WTC11 (cell line): ENCODE measurements at regions of chr7 and their contacts with region 1.

Region 1: GRCh38 chr7:118169146-118169545 is 14.8 kb upstream of the LSM8 start:
- DNase-seq: no peak
- ATAC-seq: no peak
- H3K4me3 Mint-ChIP-seq: no peak overlapping the region
- H3K27ac Mint-ChIP-seq: no peak overlapping the region
- H3K4me1 Mint-ChIP-seq: no peaks in the 10 kb centered on the region
- H3K27me3 Mint-ChIP-seq: no peaks in the 10 kb centered on the region
- CTCF ChIP-seq: no peak

Region 2: DNA sequence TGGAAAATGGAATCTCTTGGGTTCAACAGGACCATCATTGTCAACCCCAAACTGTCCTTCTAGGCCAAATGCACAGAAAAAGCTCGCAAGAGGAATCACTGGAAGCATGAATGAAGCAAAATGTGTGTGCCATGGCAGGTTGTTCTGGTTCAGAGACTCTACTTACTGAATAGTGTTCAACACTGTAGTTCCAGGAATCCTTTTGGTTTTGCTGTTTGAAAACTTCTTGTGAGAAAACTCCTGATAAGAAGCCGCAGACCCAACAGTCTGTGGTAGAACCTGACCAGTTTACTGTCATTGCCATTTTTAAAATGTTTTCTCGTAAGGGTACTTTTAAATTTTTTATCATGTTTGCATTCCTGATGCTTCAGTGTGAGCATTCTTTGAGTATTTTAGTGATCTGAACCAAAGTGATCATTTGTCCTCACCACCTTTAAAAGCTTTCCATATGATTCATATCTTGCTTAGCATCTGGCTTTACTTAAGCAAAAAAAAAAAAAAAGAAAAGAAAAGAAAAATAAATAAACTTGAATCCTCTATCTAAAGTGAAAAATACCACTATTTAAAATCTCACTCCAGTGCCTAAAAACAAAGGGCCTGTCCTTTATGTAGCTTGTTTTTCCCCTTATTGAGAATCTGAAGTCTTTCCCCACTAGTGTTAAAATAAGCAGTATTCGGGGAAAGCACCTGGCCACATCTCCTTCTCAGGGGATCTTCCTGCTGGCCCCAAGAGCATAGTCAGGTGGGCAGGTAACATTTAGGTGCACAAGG is 938.7 kb before region 1 on chr7:
- CTCF ChIA-PET with region 1: no interaction called
- POLR2A ChIA-PET with region 1: no interaction called
- DNase-seq: no peak
- ATAC-seq: no peak
- H3K4me3 Mint-ChIP-seq: no peak overlapping the region
- H3K27ac Mint-ChIP-seq: no peak overlapping the region
- H3K4me1 Mint-ChIP-seq: peaks cover 8% of the 10 kb centered on the region
- H3K27me3 Mint-ChIP-seq: peaks cover 1% of the 10 kb centered on the region; the same call in 1 of the 2 replicates
- CTCF ChIP-seq: no peak

Region 3: DNA sequence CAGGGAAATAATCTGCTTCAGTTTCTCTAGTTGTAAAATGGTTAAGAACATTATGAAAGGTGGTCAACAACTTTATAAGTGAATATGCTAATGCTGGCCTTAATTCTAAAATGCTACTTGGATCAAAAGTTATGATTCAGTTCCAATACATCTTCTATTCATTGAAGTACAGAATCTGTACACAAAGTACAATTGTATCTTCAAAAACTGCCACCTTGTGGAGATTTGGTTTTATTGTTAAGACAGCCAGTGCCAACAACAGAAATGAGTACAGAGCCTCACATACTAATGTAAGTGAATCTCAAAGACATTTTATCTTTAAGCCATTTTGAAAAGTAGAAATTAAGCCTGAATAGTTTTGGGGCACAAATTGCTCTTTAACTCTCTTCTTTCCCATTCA is 495.3 kb before region 1 on chr7:
- CTCF ChIA-PET with region 1: no interaction called
- POLR2A ChIA-PET with region 1: interaction called, 10 read pairs
- DNase-seq: no peak
- ATAC-seq: no peak
- H3K4me3 Mint-ChIP-seq: peak overlapping the region; percentile 68
- H3K27ac Mint-ChIP-seq: peak overlapping the region; percentile 95
- H3K4me1 Mint-ChIP-seq: peaks cover 70% of the 10 kb centered on the region
- H3K27me3 Mint-ChIP-seq: no peaks in the 10 kb centered on the region
- CTCF ChIP-seq: no peak